ENCODE measurements at regions of chr14 and their contacts with region 1.

Region 1: DNA sequence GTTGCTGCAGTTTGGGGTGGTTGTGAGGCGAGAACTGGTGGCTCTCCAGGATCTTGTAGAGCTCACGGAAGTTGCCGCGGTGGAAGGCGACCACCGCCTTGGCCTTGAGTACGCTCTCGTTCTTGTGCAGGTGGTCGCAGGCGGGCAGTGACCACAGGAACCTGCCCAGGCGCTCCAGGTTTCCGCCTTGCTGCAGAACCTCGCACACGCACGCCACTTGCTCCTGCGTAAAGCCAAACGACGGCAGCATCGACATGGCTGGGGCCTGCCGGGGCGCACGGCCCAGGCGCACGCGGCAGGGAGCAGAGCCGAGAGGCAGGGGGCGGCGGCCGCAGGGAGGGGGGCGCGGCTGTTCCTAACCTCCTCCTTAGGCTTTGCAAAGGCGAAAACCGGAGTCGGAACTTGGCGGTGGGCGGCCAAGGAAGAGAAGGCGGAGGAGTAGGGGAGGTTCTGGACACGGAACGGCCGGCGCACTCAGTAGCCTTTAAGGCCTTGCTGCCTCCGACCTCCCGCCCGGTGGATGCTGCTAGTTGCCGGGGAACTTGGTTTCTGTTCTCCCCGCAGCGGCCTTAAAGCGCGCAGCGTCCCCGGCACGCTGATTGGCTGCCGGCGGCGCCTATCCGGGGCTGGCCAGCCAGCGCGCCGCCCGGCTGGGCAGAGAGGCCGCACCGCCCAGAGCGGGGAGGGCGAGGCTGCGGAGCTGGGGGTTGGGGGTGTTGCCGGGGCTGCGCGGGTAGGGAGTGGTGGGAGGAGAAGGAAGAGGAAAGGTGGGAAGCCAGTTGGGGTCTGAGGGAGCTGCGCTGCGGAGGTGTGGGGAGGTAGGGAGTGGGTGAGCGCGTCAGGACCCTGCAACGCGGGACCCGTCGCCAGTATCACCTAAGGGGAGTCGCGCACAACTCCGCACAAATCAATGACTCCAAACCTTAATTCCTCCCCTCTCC is at the start of gene SIX1:
- DNase-seq: no peak
- H3K4me3 Mint-ChIP-seq: peak within 1 kb of the TSS; percentile 69
- H3K27ac Mint-ChIP-seq: peak within 1 kb of the TSS; percentile 76
- H3K4me1 Mint-ChIP-seq: peaks cover 59% of the 10 kb centered on the region
- H3K27me3 Mint-ChIP-seq: peaks cover 84% of the 10 kb centered on the region
- total RNA-seq, gene SIX1: 0.39 and 0.41 TPM in 2 replicates

Region 2: GRCh38 chr14:59679872-59680271 is 969.3 kb before region 1 on chr14:
- intact Hi-C with region 1: no loop called
- DNase-seq: no peak
- H3K4me3 Mint-ChIP-seq: no peak overlapping the region
- H3K27ac Mint-ChIP-seq: no peak overlapping the region
- H3K4me1 Mint-ChIP-seq: no peaks in the 10 kb centered on the region
- H3K27me3 Mint-ChIP-seq: peaks cover 4% of the 10 kb centered on the region

Region 3: GRCh38 chr14:60331201-60332045 is 317.8 kb before region 1 on chr14:
- intact Hi-C with region 1: loop called (anchors 10 kb)
- DNase-seq: peak; percentile 60
- H3K4me3 Mint-ChIP-seq: peak overlapping the region; percentile 92
- H3K27ac Mint-ChIP-seq: peak overlapping the region; percentile 94
- H3K4me1 Mint-ChIP-seq: peaks cover 45% of the 10 kb centered on the region
- H3K27me3 Mint-ChIP-seq: peaks cover 37% of the 10 kb centered on the region

Region 4: DNA sequence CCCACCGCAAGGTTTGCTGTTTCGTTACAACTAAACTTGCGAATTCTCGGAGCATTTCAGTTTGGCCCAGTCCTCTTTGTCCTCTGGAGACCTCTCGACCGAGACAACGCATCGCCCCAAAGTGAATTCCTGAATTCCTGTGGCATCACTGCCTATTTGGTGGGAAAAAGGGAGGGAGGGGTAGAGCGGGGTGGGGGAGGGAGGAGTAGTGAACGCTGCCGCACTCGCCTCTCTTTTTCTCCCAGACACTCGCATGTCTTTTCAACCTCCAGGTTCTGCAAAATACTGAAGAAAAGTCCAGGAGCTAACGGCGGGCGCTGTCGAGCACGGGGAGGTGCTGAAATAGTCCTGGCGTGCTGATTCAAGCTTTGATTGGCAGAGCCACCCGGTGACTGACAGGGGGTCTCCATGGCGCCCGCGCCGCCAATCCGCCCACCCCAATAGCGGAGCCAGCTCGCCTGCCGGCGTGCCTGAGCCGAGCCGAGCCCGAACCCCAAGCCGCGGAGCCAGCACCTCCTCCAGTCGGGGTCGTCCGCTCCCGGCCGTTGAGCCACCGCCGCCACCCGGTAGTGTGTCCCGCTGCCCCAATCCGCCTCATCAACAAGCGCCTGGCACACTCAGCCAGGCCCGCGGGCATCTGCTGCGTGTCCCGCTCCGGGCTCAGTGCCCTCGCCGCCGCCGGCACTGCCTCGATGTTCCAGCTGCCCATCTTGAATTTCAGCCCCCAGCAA is 140.3 kb before region 1 on chr14 and contains the start of gene SIX6:
- intact Hi-C with region 1: loop called (anchors 1 kb)
- DNase-seq: no peak
- H3K4me3 Mint-ChIP-seq: peak within 1 kb of the TSS; percentile 26
- H3K27ac Mint-ChIP-seq: peak within 1 kb of the TSS; percentile 52
- H3K4me1 Mint-ChIP-seq: no peaks in the 10 kb centered on the region
- H3K27me3 Mint-ChIP-seq: peaks cover 83% of the 10 kb centered on the region
- total RNA-seq, gene SIX6: not detected in 2 replicates

Region 5: GRCh38 chr14:60665153-60665511 is 15.9 kb after region 1 on chr14:
- intact Hi-C with region 1: no loop called
- DNase-seq: no peak
- H3K4me3 Mint-ChIP-seq: no peak overlapping the region
- H3K27ac Mint-ChIP-seq: no peak overlapping the region
- H3K4me1 Mint-ChIP-seq: no peaks in the 10 kb centered on the region
- H3K27me3 Mint-ChIP-seq: peaks cover 40% of the 10 kb centered on the region

Region 6: GRCh38 chr14:61308198-61308597 is 659.0 kb after region 1 on chr14:
- intact Hi-C with region 1: no loop called
- DNase-seq: no peak
- H3K4me3 Mint-ChIP-seq: no peak overlapping the region
- H3K27ac Mint-ChIP-seq: no peak overlapping the region
- H3K4me1 Mint-ChIP-seq: peaks cover 17% of the 10 kb centered on the region
- H3K27me3 Mint-ChIP-seq: no peaks in the 10 kb centered on the region

Measured in activated T-helper 1 cell treated with anti-CD3 and anti-CD28 coated beads, Interleukin-12 subunit alpha, Interleukin-12 subunit beta, Interleukin-2, Interleukin-4 antibody, amounts not matched to agents 30 ng/mL and 10 ng/mL and 1 ng/mL, durations not matched to agents 14 hours and 24 hours and 36 hours (primary cell).